ENCODE measurements at regions of chr4 and their contacts with region 1.

Region 1: GRCh38 chr4:148515248-148515647 is 73.0 kb upstream of the NR3C2 start:
- DNase-seq: peak; percentile 88
- ATAC-seq: peak; percentile 90
- H3K4me3 ChIP-seq: peak overlapping the region; percentile 3; the same call in 1 of the 2 replicates
- H3K27ac ChIP-seq: peak overlapping the region; percentile 89
- H3K4me1 ChIP-seq: peaks cover 35% of the 10 kb centered on the region
- H3K27me3 ChIP-seq: no peaks in the 10 kb centered on the region
- CTCF ChIP-seq: no peak

Region 2: DNA sequence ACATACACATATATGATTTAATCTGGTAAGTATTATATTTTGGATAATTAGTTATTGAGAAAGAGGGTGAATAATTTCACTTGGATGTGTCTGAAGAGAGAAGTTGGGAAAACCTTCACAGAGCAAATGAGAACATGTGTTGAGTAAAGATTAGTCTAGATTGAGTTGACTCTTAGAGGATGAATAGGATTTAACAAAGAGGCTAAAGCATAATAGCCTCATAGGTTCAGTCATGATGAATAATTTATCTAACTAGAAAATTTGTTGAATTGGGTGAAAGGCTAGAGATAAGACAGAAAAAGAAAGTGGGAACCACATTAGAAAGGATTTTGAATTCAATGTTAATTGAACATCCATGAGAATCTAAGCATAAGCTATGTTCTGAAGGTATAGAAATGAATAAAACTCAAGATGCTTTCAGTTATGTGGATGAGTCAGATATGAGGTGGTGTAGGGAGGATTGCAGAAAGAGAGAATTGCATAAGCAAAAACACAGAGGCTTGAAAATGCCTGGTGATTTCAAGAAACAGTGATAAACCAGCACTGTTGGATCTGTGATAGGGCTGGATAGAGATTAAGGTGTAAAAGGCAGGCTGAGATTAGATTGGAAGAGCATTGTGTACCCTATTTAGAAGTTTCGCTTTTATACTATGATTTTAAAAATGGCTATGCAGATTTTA is 134.5 kb after region 1 on chr4:
- CTCF ChIA-PET with region 1: no interaction called
- POLR2A ChIA-PET with region 1: no interaction called
- intact Hi-C with region 1: loop called (anchors 10 kb)
- DNase-seq: peak; percentile 23
- ATAC-seq: 0 out of 2 replicates have a peak, but pooled peaks have one; percentile 31
- H3K4me3 ChIP-seq: no peak overlapping the region
- H3K27ac ChIP-seq: no peak overlapping the region
- H3K4me1 ChIP-seq: no peaks in the 10 kb centered on the region; the same call in 1 of the 2 replicates
- H3K27me3 ChIP-seq: no peaks in the 10 kb centered on the region
- CTCF ChIP-seq: no peak

Region 3: DNA sequence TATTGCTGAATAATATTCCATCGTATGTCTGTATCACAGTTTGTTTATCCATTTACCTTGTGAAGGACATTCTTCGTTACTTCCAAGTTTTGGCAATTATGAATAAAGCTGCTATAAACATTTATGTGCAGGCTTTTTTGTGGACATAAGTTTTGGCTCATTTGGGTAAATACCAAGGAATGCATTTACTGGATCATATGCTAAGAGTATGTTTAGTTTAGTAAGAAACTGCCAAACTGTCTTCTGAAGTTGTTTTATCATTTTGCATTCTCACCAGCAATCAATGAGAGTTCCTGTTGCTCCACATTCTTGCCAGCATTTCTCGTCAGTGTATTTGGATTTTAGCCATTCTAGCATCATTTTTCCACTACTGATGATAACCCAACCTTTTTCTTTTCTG is 159.6 kb after region 1 on chr4:
- CTCF ChIA-PET with region 1: no interaction called
- POLR2A ChIA-PET with region 1: no interaction called
- intact Hi-C with region 1: loop called (anchors 1 kb)
- DNase-seq: peak; percentile 56
- ATAC-seq: peak; percentile 81
- H3K4me3 ChIP-seq: no peak overlapping the region
- H3K27ac ChIP-seq: 0 out of 2 replicates have a peak overlapping the region, but pooled peaks have one; percentile 43
- H3K4me1 ChIP-seq: no peaks in the 10 kb centered on the region
- H3K27me3 ChIP-seq: no peaks in the 10 kb centered on the region
- CTCF ChIP-seq: no peak

Region 4: DNA sequence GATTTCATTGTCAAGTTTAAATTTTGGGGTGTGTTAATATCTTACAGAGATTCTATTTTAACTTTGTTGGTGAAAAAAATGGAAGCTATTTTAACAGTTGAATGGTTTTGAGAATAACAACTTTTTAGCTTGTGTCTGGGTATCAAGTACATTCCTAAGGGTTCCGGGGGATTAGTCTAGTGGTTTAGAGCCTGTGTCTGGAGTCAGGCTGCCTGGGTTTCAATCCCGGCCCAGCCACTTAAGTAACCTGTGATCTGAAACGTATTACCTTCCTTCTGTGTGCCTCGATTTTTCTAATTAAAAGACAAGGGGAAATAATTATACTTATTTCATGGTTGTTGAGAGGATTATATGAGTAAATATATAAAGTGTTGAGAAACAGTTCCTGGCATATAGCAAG is 215.5 kb after region 1 on chr4:
- CTCF ChIA-PET with region 1: no interaction called
- POLR2A ChIA-PET with region 1: no interaction called
- intact Hi-C with region 1: no loop called
- DNase-seq: no peak
- ATAC-seq: no peak
- H3K4me3 ChIP-seq: no peak overlapping the region
- H3K27ac ChIP-seq: no peak overlapping the region
- H3K4me1 ChIP-seq: no peaks in the 10 kb centered on the region
- H3K27me3 ChIP-seq: no peaks in the 10 kb centered on the region
- CTCF ChIP-seq: no peak

Measured in PC-3 (cell line).